IMR-90 (cell line): ENCODE measurements at regions of chr5 and their contacts with region 1.

Region 1: DNA sequence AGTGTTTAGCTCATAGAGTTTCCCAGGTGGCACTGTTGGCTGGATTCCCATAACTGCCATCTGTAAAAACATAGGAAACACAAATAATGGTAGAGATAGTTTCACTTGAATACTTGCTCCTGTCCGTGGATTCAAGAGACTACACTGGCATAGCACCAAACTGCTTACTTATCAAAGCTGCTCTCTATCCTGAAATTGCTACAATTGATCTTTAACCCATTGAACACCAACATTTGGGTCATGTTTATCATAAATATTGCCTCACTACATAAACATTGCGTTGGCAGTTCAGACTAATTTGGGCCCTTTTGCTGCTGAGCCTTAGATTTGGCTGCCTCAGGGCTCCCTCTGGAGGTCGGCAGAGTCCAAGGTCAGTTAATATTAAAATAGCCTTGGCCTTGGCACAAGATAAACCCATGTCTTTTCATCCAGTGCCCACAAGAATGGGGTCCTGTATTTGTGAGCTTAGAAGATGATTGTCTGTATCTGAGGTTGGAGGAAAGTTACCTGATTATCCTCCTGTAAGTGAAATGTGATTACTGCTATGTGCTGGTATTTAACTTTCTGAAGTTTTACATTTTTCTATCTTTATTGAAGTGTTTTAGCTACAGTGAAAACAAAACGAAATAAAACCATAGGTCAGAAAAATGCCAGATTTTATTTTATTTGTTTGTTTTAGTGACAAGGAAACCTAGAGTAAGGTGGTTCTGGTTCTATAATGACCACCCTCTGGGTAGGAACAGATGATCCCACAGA is 4.0 kb upstream of the RANBP3L start:
- DNase-seq: peak; percentile 38
- ATAC-seq: peak; percentile 80
- H3K4me3 ChIP-seq: no peak overlapping the region
- H3K27ac ChIP-seq: no peak overlapping the region
- H3K4me1 ChIP-seq: peaks cover 5% of the 10 kb centered on the region
- H3K27me3 ChIP-seq: peaks cover 8% of the 10 kb centered on the region
- CTCF ChIP-seq: peak; percentile 84
- POLR2A ChIP-seq: no peak
- RAD21 ChIP-seq: peak; percentile 81

Region 2: DNA sequence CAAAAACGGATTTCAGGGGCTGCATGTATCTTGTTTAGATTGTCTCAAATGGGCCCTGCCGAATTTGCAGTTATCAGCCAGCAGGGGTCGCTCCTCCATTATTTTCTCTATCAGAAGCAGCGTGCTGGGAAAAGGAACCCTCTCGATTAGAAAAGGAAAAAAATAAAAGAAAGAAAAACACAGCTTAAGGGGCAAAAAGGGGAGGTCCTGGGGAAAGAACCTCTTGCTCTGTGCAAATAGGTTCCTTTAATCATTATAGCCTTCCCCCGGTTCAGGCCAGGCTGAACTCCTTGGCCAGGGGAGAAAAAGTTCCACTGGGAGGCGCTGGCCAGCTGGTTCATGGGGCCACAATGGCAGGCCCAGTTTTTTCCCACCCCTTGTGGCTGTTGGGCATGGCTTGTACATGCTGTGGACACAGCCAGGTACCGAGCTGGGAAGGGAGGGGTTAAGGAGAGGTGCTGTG is 342.3 kb before region 1 on chr5:
- CTCF ChIA-PET with region 1: no interaction called
- POLR2A ChIA-PET with region 1: no interaction called
- dilution Hi-C with region 1: no loop called
- in situ Hi-C with region 1: no loop called
- intact Hi-C with region 1: loop called (anchors 5 kb)
- DNase-seq: peak; percentile 20
- ATAC-seq: no peak; the same call in 1 of the 2 replicates
- H3K4me3 ChIP-seq: no peak overlapping the region
- H3K27ac ChIP-seq: no peak overlapping the region
- H3K4me1 ChIP-seq: no peaks in the 10 kb centered on the region
- H3K27me3 ChIP-seq: peaks cover 4% of the 10 kb centered on the region
- CTCF ChIP-seq: peak; percentile 60
- POLR2A ChIP-seq: no peak
- RAD21 ChIP-seq: peak; percentile 50

Region 3: GRCh38 chr5:36177715-36178523 is 127.8 kb before region 1 on chr5:
- CTCF ChIA-PET with region 1: interaction called, 6 read pairs
- POLR2A ChIA-PET with region 1: no interaction called
- dilution Hi-C with region 1: no loop called
- in situ Hi-C with region 1: loop called (anchors 10 kb)
- intact Hi-C with region 1: loop called (anchors 1 kb)
- DNase-seq: peak; percentile 65
- ATAC-seq: peak; percentile 77
- H3K4me3 ChIP-seq: no peak overlapping the region
- H3K27ac ChIP-seq: no peak overlapping the region
- H3K4me1 ChIP-seq: 0 out of 2 replicates have a peak, but pooled peaks cover 5% of the 10 kb centered on the region
- H3K27me3 ChIP-seq: no peaks in the 10 kb centered on the region
- CTCF ChIP-seq: peak; percentile 63
- POLR2A ChIP-seq: no peak
- RAD21 ChIP-seq: peak; percentile 63

Region 4: DNA sequence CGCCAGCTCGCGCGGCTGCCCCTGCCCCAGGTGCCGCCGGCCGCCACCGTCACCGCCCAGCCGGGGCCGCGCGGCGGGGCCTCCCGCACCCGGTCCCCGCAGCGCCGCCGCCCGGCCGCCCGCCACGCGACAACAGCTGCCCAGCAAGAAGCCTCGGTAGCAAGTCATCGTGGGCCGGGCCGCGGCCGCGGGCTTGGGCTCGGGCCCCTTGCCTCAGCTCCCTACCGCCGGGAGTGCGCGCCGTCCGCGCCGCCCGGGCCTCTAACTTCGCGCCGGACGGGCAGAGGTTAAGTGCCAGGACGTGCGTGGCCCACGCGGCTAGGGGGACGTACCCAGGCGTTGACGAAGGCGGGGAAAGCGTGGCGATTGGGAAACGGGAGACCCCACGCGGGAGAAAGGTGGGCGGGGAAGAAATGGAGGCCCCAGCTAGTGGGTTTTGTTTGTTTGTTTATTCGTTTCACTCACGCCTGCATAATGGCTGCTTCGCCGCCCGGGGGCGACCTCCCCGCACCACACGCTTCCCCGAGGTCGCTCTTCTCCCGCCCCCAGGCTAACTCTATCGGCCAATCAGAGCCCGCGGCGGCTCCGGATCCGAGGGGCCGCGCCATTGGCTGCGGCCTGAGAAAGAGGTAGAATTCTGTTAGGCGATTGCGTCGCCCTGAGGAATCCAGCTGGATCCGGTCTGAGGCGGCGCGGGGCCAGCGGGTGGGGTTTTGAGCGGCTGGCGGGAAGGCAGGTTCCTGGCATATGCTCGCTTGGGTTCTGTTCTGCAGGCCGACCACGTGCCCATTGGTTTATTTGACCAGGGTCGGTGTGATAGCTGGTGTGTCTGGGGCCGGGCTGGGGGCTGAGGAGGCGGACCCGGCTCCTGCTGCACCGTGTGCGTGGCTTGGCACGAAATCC is 63.9 kb before region 1 on chr5 and contains the start of gene NADK2:
- CTCF ChIA-PET with region 1: interaction called, 3 read pairs
- POLR2A ChIA-PET with region 1: no interaction called
- dilution Hi-C with region 1: no loop called
- in situ Hi-C with region 1: no loop called
- intact Hi-C with region 1: loop called (anchors 1 kb)
- DNase-seq: peak; percentile 92
- ATAC-seq: peak; percentile 86
- H3K4me3 ChIP-seq: peak within 1 kb of the TSS; percentile 85
- H3K27ac ChIP-seq: peak within 1 kb of the TSS; percentile 91
- H3K4me1 ChIP-seq: peaks cover 4% of the 10 kb centered on the region
- H3K27me3 ChIP-seq: no peaks in the 10 kb centered on the region
- CTCF ChIP-seq: peak; percentile 65
- POLR2A ChIP-seq: peak; percentile 81
- RAD21 ChIP-seq: peak; percentile 31; the same call in 1 of the 2 replicates
- total RNA-seq, gene NADK2: 17.4 and 21.1 TPM in 2 replicates

Region 5: GRCh38 chr5:36252722-36253365 is 52.9 kb before region 1 on chr5:
- CTCF ChIA-PET with region 1: no interaction called
- POLR2A ChIA-PET with region 1: no interaction called
- dilution Hi-C with region 1: no loop called
- in situ Hi-C with region 1: no loop called
- intact Hi-C with region 1: no loop called
- DNase-seq: no peak
- ATAC-seq: no peak
- H3K4me3 ChIP-seq: no peak overlapping the region
- H3K27ac ChIP-seq: no peak overlapping the region
- H3K4me1 ChIP-seq: no peaks in the 10 kb centered on the region
- H3K27me3 ChIP-seq: no peaks in the 10 kb centered on the region
- CTCF ChIP-seq: no peak
- POLR2A ChIP-seq: no peak
- RAD21 ChIP-seq: no peak

Region 6: GRCh38 chr5:36690041-36690961 is 384.6 kb after region 1 on chr5:
- CTCF ChIA-PET with region 1: no interaction called
- POLR2A ChIA-PET with region 1: no interaction called
- dilution Hi-C with region 1: no loop called
- in situ Hi-C with region 1: no loop called
- intact Hi-C with region 1: loop called (anchors 10 kb)
- DNase-seq: peak; percentile 61
- ATAC-seq: peak; percentile 91
- H3K4me3 ChIP-seq: peak overlapping the region; percentile 64
- H3K27ac ChIP-seq: no peak overlapping the region
- H3K4me1 ChIP-seq: peaks cover 2% of the 10 kb centered on the region; the same call in 1 of the 2 replicates
- H3K27me3 ChIP-seq: no peaks in the 10 kb centered on the region; the same call in 1 of the 2 replicates
- CTCF ChIP-seq: peak; percentile 79
- POLR2A ChIP-seq: no peak
- RAD21 ChIP-seq: peak; percentile 49

Region 7: GRCh38 chr5:36790838-36791237 is 485.1 kb after region 1 on chr5:
- CTCF ChIA-PET with region 1: no interaction called
- POLR2A ChIA-PET with region 1: no interaction called
- dilution Hi-C with region 1: no loop called
- in situ Hi-C with region 1: no loop called
- intact Hi-C with region 1: no loop called
- DNase-seq: peak; percentile 7
- ATAC-seq: no peak
- H3K4me3 ChIP-seq: no peak overlapping the region
- H3K27ac ChIP-seq: no peak overlapping the region
- H3K4me1 ChIP-seq: no peaks in the 10 kb centered on the region
- H3K27me3 ChIP-seq: peaks cover 6% of the 10 kb centered on the region
- CTCF ChIP-seq: no peak
- POLR2A ChIP-seq: no peak
- RAD21 ChIP-seq: no peak